Activated CD8-positive, alpha-beta T cell treated with anti-CD3 and anti-CD28 coated beads, Interleukin-2, amount 10 ng/mL, durations not matched to agents 7 days and 5 days (primary cell): ENCODE measurements at regions of chr2 and their contacts with region 1.

Region 1: DNA sequence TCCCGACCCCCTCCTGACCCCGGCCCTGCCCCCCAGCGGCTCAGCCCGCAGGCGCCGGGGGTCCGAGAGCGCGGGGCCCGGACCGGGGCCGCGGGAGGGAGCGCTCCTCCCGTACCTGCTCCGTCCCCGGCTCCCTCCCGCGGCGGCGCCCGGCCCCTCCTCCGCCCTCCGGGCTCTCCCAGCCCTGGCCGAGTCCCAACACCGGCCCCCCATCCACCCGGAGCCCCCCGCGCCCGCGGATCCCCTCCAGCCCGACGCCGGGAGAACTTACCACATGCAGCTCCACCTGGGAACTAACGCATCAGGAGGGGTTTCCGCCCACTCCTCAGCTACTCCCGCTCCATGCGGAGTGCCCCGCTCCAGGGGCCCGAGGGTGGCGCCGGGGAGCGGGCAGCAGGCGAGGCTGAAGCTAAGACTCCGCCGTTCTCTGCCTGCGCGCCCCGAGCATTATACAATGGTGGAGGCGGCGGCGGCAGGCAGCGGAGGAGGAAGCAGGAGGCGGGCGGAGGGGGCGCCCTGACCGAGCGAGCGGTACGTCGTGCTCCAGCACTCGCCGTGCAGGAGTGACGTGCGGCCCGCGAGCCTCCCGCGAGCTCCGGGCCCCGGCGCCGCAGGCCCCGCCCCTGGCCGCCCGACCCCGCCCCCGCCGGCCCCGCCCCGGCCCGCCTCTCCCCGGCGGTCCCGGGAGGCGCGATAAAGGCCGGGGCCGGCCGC is at the start of gene SERTAD2:
- DNase-seq: peak; percentile 87
- ATAC-seq: peak; percentile 85
- H3K4me3 Mint-ChIP-seq: peak within 1 kb of the TSS; percentile 85
- H3K27ac Mint-ChIP-seq: peak within 1 kb of the TSS; percentile 90
- H3K4me1 Mint-ChIP-seq: peaks cover 65% of the 10 kb centered on the region
- H3K27me3 Mint-ChIP-seq: no peaks in the 10 kb centered on the region
- total RNA-seq, gene SERTAD2: 21.4 to 21.8 TPM

Region 2: GRCh38 chr2:64493788-64494187 is 159.7 kb before region 1 on chr2:
- CTCF ChIA-PET with region 1: no interaction called
- POLR2A ChIA-PET with region 1: no interaction called
- DNase-seq: no peak
- ATAC-seq: no peak
- H3K4me3 Mint-ChIP-seq: no peak overlapping the region
- H3K27ac Mint-ChIP-seq: no peak overlapping the region
- H3K4me1 Mint-ChIP-seq: peaks cover 15% of the 10 kb centered on the region
- H3K27me3 Mint-ChIP-seq: peaks cover 38% of the 10 kb centered on the region

Region 3: DNA sequence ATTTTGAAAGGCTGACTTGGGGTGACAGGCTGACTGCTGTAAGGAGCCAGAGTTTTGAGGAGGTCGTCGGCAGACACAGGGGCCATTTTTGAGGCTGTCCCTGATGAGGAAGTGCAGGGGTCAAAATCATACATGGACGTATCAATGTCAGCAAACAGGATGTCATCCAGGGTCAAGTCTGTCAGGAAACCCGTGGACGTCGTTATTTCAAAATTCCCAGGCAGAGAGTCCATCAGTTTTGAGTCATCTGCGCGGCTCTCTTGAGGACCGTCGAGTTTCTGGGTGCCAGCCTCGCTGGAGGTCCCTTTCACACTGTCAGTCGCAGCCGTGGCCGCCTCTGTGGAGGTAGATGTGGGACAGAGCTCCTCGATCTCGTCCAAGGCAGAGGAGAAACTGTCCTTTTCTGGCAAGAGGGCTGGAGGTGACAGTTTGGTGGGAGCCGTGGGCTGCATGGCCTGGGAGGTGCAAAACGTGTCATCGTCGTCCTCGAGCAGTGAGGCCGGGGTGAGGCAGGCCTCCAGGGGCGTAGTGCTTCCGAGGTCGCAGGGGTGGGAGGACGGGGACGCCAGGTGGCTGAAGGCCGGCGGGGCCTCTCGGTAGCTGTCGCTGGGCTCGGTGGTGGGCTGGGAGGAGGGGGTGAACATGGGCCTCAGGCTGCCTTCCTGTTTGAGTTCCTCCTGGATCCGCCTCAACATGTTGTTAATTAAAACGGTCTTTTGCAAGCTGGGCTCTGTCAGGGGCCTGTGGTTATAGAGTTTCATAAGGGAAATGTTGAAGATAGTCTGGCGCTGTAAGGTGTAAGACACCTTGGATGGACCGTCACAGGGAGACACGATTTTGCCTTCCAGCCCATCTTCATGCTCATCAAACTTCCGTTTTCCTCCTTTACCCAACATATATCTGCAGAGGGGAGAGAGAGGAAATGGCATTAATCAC is 17.3 kb before region 1 on chr2:
- CTCF ChIA-PET with region 1: interaction called, 10 read pairs
- POLR2A ChIA-PET with region 1: interaction called, 9 read pairs
- DNase-seq: peak; percentile 49
- ATAC-seq: peak; percentile 69
- H3K4me3 Mint-ChIP-seq: peak overlapping the region; percentile 41
- H3K27ac Mint-ChIP-seq: peak overlapping the region; percentile 90
- H3K4me1 Mint-ChIP-seq: peaks cover 57% of the 10 kb centered on the region
- H3K27me3 Mint-ChIP-seq: no peaks in the 10 kb centered on the region

Region 4: DNA sequence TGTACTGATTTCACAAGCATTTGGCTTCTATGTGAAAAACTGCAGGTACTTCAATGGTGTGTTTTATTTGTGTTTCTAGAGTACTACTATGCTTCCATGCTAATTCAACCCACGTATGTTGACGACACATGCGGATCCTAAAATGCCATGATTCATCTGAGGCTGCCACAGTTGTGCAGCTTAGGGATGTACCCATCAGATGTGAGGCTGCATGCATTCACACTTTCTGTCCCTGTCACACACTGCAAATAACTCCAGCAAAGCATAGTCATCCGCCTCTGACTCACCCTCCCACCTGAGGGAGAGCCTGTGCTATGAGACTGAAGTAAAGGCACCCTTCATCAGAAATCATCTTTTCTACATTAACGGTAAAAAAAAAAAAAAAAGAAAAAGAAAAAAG is 22.4 kb after region 1 on chr2:
- CTCF ChIA-PET with region 1: interaction called, 27 read pairs
- POLR2A ChIA-PET with region 1: interaction called, 14 read pairs
- DNase-seq: peak; percentile 49
- ATAC-seq: peak; percentile 81
- H3K4me3 Mint-ChIP-seq: no peak overlapping the region
- H3K27ac Mint-ChIP-seq: no peak overlapping the region
- H3K4me1 Mint-ChIP-seq: peaks cover 47% of the 10 kb centered on the region
- H3K27me3 Mint-ChIP-seq: no peaks in the 10 kb centered on the region

Region 5: DNA sequence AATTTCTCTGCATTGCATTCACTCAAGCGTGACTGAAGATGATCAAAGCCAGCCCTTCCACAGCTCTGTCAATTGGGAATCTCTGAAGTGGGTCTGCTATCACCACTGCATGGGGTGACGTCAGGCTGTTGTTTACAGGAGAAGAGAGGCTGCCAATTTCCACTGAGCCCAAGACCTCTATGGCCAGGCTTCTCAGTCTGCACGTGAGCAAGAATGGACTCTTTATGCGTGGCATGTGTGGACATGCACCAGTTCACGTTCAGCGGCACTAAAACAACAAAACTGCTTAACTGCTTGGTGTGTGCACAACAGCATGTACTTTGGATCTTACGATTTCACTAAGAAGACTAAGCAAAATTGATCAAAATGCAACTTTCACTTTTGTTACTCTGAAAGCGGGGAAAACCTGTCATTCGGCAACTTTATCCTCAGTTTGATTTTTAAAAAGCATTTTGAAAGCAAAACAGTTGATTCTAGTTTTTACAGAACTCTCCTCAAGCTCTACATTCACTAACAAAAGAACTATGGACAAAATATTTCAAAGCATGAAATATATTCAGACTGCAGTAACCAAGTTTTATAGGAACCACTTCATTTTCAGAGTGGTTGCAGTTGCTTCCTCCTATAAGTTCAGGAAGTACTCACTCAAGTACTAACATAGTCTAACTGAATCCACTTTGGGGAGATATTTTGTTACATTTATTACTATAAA is 77.2 kb after region 1 on chr2:
- CTCF ChIA-PET with region 1: interaction called, 24 read pairs
- POLR2A ChIA-PET with region 1: interaction called, 77 read pairs
- DNase-seq: peak; percentile 60
- ATAC-seq: peak; percentile 72
- H3K4me3 Mint-ChIP-seq: peak overlapping the region; percentile 81
- H3K27ac Mint-ChIP-seq: peak overlapping the region; percentile 92
- H3K4me1 Mint-ChIP-seq: peaks cover 75% of the 10 kb centered on the region
- H3K27me3 Mint-ChIP-seq: no peaks in the 10 kb centered on the region

Region 6: DNA sequence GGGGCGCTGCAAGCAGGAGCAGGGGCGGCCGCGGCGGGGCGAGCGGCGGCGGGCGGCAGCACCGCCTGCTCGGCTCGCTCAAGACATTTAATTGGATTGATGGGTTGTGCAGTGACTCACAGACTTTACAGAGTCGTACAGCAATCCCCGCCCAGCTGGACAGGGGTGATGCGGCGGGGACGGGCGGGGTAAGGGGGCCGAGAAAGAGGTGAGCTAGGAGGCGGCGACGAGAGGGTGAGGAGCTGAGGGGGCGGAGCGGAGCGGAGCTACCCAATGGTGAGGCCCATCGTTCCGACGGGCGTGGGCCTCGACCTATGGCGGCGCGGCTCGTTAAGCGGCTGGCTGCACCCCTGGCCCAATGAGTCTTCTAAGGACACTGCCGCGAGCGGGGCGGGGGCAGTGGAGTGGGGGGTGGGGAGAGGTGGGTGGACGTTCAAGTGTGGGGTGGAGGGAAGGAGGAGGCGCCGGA is 97.3 kb after region 1 on chr2:
- CTCF ChIA-PET with region 1: interaction called, 276 read pairs
- POLR2A ChIA-PET with region 1: interaction called, 144 read pairs
- DNase-seq: peak; percentile 99
- ATAC-seq: peak; percentile 91
- H3K4me3 Mint-ChIP-seq: peak overlapping the region; percentile 80
- H3K27ac Mint-ChIP-seq: peak overlapping the region; percentile 98
- H3K4me1 Mint-ChIP-seq: peaks cover 27% of the 10 kb centered on the region
- H3K27me3 Mint-ChIP-seq: no peaks in the 10 kb centered on the region

Region 7: GRCh38 chr2:64831134-64831976 is 177.8 kb after region 1 on chr2:
- CTCF ChIA-PET with region 1: interaction called, 184 read pairs
- POLR2A ChIA-PET with region 1: interaction called, 7 read pairs
- DNase-seq: peak; percentile 86
- ATAC-seq: peak; percentile 87
- H3K4me3 Mint-ChIP-seq: peak overlapping the region; percentile 22
- H3K27ac Mint-ChIP-seq: peak overlapping the region; percentile 63
- H3K4me1 Mint-ChIP-seq: peaks cover 22% of the 10 kb centered on the region
- H3K27me3 Mint-ChIP-seq: peaks cover 16% of the 10 kb centered on the region

Region 8: GRCh38 chr2:65142515-65142914 is 489.0 kb after region 1 on chr2:
- CTCF ChIA-PET with region 1: no interaction called
- POLR2A ChIA-PET with region 1: no interaction called
- DNase-seq: no peak
- ATAC-seq: peak; percentile 49
- H3K4me3 Mint-ChIP-seq: no peak overlapping the region
- H3K27ac Mint-ChIP-seq: no peak overlapping the region
- H3K4me1 Mint-ChIP-seq: no peaks in the 10 kb centered on the region
- H3K27me3 Mint-ChIP-seq: peaks cover 20% of the 10 kb centered on the region